ENCODE measurements at regions of chr22 and their contacts with region 1.

Region 1: GRCh38 chr22:46150034-46150654 is at the start of gene PPARA:
- DNase-seq: peak; percentile 60 to 93 (median 89)
- ATAC-seq: peak; percentile 77
- H3K4me3 ChIP-seq: peak within 1 kb of the TSS; percentile 82 to 91
- H3K4me3 Mint-ChIP-seq: peak within 1 kb of the TSS; percentile 83
- H3K27ac ChIP-seq: peak within 1 kb of the TSS; percentile 46 to 60
- H3K27ac Mint-ChIP-seq: peak within 1 kb of the TSS; percentile 89
- H3K4me1 ChIP-seq: peaks cover 21% of the 10 kb centered on the region
- H3K4me1 Mint-ChIP-seq: peaks cover 20% of the 10 kb centered on the region
- H3K27me3 ChIP-seq: no peaks in the 10 kb centered on the region
- H3K27me3 Mint-ChIP-seq: no peaks in the 10 kb centered on the region
- CTCF ChIP-seq: no peak
- total RNA-seq, gene PPARA: 4.4 to 6.9 TPM

Region 2: GRCh38 chr22:46233231-46233630 is 83.1 kb after region 1 on chr22:
- CTCF ChIA-PET with region 1: no interaction called
- POLR2A ChIA-PET with region 1: no interaction called
- intact Hi-C with region 1: no loop called
- DNase-seq: no peak
- ATAC-seq: no peak
- H3K4me3 ChIP-seq: no peak overlapping the region
- H3K4me3 Mint-ChIP-seq: no peak overlapping the region
- H3K27ac ChIP-seq: no peak overlapping the region
- H3K27ac Mint-ChIP-seq: no peak overlapping the region
- H3K4me1 ChIP-seq: no peaks in the 10 kb centered on the region
- H3K4me1 Mint-ChIP-seq: peaks cover under 1% of the 10 kb centered on the region
- H3K27me3 ChIP-seq: no peaks in the 10 kb centered on the region
- H3K27me3 Mint-ChIP-seq: no peaks in the 10 kb centered on the region
- CTCF ChIP-seq: no peak

Region 3: GRCh38 chr22:46267431-46268279 is 117.5 kb after region 1 on chr22 and contains the start of gene TTC38:
- CTCF ChIA-PET with region 1: no interaction called
- POLR2A ChIA-PET with region 1: no interaction called
- intact Hi-C with region 1: loop called in 1 of 2 experiments (anchors 2 kb)
- DNase-seq: peak in 7 of 9 experiments; percentile 13 to 73 (median 52)
- ATAC-seq: peak; percentile 88
- H3K4me3 ChIP-seq: peak within 1 kb of the TSS; percentile 80 to 83
- H3K4me3 Mint-ChIP-seq: peak within 1 kb of the TSS; percentile 88
- H3K27ac ChIP-seq: peak within 1 kb of the TSS in 1 of 2 experiments; percentile 31
- H3K27ac Mint-ChIP-seq: peak within 1 kb of the TSS; percentile 37
- H3K4me1 ChIP-seq: peaks cover 3% of the 10 kb centered on the region
- H3K4me1 Mint-ChIP-seq: peaks cover 17% of the 10 kb centered on the region
- H3K27me3 ChIP-seq: no peaks in the 10 kb centered on the region
- H3K27me3 Mint-ChIP-seq: peaks cover 14% of the 10 kb centered on the region
- CTCF ChIP-seq: no peak
- total RNA-seq, gene TTC38: 5.9 to 7.9 TPM

Region 4: DNA sequence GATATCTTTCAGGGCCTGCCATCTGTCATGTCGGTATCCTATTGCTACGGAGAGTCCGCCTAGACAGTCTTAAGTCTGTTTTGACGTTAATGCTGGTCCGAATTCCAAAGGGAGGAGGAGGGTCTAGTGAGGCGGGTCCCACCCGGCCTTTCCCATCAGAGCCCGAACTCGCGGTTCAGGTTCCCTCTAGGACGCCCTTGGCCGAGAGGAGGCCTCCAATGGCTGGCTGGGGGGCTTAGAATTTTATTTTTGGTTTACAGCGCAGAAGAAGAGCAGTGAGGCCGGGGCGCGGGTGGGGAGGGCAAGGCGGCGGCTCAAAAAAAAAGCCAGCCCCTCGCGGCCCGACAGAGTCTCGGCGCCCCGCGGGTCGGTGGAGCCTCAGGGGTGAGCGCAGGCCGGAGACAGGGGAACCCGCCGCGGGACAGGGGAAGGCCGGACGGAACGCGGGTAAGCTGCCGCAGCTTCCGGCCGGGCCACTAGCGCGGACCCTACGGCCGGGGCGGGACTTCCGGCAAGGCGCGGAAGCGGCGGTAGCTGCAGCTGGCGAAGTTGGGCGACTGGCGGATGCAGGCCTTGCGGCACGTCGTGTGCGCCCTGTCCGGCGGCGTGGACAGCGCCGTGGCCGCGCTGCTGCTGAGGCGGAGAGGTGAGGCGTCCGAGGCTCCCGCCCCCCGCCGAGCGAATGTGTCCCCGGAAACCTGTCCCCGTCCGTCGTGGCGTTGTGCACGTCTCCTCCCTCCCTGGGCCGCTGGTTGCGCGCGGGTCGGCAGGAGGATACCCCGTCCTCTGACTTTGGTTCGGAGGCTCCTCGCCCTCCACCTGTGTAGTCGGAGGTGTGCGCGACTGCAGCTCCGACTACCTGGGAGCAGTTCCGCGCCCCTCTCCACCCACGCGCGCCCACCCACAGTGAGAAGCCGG is 185.3 kb after region 1 on chr22 and contains the start of gene TRMU:
- CTCF ChIA-PET with region 1: no interaction called
- POLR2A ChIA-PET with region 1: no interaction called
- intact Hi-C with region 1: loop called in 1 of 2 experiments (anchors 1 kb)
- DNase-seq: peak; percentile 29 to 86 (median 75)
- ATAC-seq: peak; percentile 80
- H3K4me3 ChIP-seq: peak within 1 kb of the TSS; percentile 80 to 94
- H3K4me3 Mint-ChIP-seq: peak within 1 kb of the TSS; percentile 95
- H3K27ac ChIP-seq: peak within 1 kb of the TSS; percentile 68 to 86
- H3K27ac Mint-ChIP-seq: peak within 1 kb of the TSS; percentile 91
- H3K4me1 ChIP-seq: peaks cover 16% of the 10 kb centered on the region
- H3K4me1 Mint-ChIP-seq: peaks cover 39% of the 10 kb centered on the region
- H3K27me3 ChIP-seq: no peaks in the 10 kb centered on the region
- H3K27me3 Mint-ChIP-seq: no peaks in the 10 kb centered on the region
- CTCF ChIP-seq: no peak
- total RNA-seq, gene TRMU: 51.0 to 56.3 TPM